Spleen (tissue), 13 donors: ENCODE measurements at regions of chr14 and their contacts with region 1.

Region 1: GRCh38 chr14:89178802-89179535 is 238.1 kb downstream of the FOXN3 start:
- DNase-seq: no peak
- H3K4me3 ChIP-seq: no peak overlapping the region
- H3K27ac ChIP-seq: no peak overlapping the region
- H3K4me1 ChIP-seq: peaks cover 0 to 19% (median 9%) of the 10 kb centered on the region in 6 donors
- H3K27me3 ChIP-seq: no peaks in the 10 kb centered on the region
- CTCF ChIP-seq: no peak
- POLR2A ChIP-seq: no peak

Region 2: GRCh38 chr14:88470542-88471440 is 708.2 kb before region 1 on chr14:
- intact Hi-C with region 1: no loop called
- DNase-seq: no peak
- H3K4me3 ChIP-seq: no peak overlapping the region
- H3K27ac ChIP-seq: no peak overlapping the region
- H3K4me1 ChIP-seq: no peaks in the 10 kb centered on the region
- H3K27me3 ChIP-seq: no peaks in the 10 kb centered on the region
- CTCF ChIP-seq: no peak
- POLR2A ChIP-seq: no peak

Region 3: DNA sequence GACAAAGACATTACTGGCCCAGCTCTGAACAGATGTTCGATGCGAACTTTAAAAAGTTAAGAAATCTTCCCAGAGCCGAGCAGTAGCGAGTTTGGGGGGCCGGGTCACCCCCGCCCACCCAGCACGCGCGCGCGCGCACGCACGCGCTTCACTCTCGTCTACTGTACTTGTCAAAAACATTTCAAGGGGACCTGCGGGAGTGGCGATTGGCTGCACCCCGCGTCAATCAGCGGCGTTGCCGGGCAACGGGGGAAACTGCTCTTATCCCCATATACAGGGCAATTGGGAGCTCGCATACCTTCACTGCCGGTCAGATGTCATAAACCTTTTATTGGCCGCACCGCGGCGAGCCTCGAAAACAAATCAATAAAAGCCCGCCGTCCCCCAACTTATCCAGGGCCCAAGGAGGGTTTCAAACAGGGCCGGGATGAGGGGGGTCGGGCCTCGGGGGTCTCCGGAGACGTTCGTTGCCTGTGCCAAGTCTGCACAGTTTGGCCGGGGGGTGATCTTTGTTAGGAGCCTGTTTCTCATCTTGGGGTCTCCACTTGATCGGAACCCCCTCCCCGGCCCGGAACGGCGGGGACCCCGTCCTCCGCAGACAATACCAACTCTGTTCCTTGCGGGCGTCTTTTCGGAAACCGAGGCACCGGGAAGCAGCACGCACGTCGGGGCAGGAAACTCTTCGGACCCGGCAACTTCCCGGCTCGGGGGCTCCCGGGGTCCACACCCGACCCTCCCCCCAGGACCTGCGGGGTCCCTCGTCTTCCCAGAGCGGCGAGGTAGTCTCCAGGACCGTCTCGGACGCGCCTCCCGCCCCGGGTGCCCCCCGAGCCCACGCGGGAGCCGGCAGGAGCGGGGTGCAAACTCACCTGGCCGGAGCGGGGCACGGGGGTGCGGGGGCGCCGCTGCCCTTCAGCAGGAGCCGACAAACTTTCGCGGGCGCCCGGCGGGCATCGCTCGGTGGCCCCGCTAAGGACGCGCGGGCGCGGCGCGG is 237.3 kb after region 1 on chr14:
- intact Hi-C with region 1: loop called (anchors 10 kb)
- DNase-seq: peak; percentile 98
- H3K4me3 ChIP-seq: peak overlapping the region; percentile 68 to 95 (median 86)
- H3K27ac ChIP-seq: peak overlapping the region; percentile 86 to 96 (median 94)
- H3K4me1 ChIP-seq: peaks cover 8 to 59% (median 33%) of the 10 kb centered on the region in 6 donors
- H3K27me3 ChIP-seq: no peaks in the 10 kb centered on the region
- CTCF ChIP-seq: no peak
- POLR2A ChIP-seq: peak in 1 of 3 donors; percentile 9

Region 4: GRCh38 chr14:89767861-89768268 is 588.9 kb after region 1 on chr14:
- intact Hi-C with region 1: loop called (anchors 10 kb)
- DNase-seq: no peak
- H3K4me3 ChIP-seq: no peak overlapping the region
- H3K27ac ChIP-seq: peak overlapping the region in 1 of 8 donors; percentile 16
- H3K4me1 ChIP-seq: peaks cover 3 to 35% (median 14%) of the 10 kb centered on the region in 6 donors
- H3K27me3 ChIP-seq: no peaks in the 10 kb centered on the region
- CTCF ChIP-seq: peak in 10 of 11 experiments; percentile 29 to 74 (median 67)
- POLR2A ChIP-seq: no peak

Region 5: GRCh38 chr14:89915114-89915878 is 736.3 kb after region 1 on chr14:
- intact Hi-C with region 1: loop called (anchors 10 kb)
- DNase-seq: no peak
- H3K4me3 ChIP-seq: no peak overlapping the region
- H3K27ac ChIP-seq: no peak overlapping the region
- H3K4me1 ChIP-seq: peaks cover 0 to 25% (median 5%) of the 10 kb centered on the region in 6 donors
- H3K27me3 ChIP-seq: no peaks in the 10 kb centered on the region
- CTCF ChIP-seq: peak; percentile 78 to 93 (median 89)
- POLR2A ChIP-seq: no peak